ENCODE measurements at regions of chr20 and their contacts with region 1.

Region 1: GRCh38 chr20:40689943-40690835 is 1.2 kb upstream of the MAFB start:
- DNase-seq: no peak
- H3K4me3 ChIP-seq: peak overlapping the region; percentile 52
- H3K27me3 ChIP-seq: peaks cover 26% of the 10 kb centered on the region
- CTCF ChIP-seq: peak; percentile 93

Region 2: DNA sequence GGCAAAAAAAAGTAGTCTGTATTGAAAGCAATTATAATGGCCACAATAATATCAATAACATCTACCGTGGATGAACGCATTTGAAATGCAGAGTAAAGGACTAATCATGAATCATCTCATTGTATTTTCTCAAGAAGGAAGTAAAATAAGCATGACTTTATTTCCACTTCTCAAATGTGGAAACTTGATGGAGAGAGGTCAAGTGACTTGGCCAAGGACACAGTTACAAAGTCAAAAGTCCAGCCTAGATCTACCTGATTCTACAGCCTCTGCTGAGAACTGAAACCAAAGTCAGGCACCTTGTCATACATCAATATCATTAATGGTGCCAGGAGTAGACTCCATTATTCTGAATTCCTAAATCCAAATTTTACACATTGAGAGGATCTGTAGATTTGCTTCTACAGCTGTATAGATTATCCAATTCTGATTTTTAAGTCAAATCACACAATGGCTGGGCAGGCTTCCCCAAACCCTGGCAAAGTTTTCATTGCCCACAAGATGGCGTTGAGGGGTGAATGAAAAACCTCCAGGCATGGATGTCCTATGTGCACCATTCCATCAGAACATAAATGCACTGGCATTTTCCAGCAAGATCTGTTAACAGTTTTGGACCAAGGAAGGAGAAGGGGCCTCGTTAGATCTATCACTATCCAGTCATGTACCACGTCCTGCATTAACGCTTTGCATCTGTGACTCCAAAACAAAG is 424.2 kb before region 1 on chr20:
- CTCF ChIA-PET with region 1: interaction called, 12 read pairs
- POLR2A ChIA-PET with region 1: no interaction called
- DNase-seq: no peak
- H3K4me3 ChIP-seq: no peak overlapping the region
- H3K27me3 ChIP-seq: no peaks in the 10 kb centered on the region
- CTCF ChIP-seq: peak; percentile 57

Region 3: DNA sequence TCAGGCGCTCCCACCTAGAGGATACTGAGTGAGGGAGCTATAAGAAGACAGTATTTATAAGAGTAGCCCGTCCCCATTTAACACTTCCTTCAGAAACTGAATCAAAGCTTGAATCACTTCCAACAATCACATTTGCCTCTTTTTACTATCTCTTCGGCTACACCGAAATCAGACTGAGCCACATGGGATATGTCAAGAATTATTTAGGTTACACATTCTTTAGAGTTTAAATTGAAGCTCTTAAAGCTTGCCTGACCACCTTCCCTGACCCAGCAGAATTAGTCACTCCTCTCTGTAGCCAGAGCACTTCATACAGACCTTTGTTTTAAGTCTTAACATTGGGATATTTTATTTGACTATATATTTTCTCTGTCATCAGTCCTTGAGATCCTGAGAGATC is 164.8 kb before region 1 on chr20:
- CTCF ChIA-PET with region 1: no interaction called
- POLR2A ChIA-PET with region 1: no interaction called
- DNase-seq: no peak
- H3K4me3 ChIP-seq: no peak overlapping the region
- H3K27me3 ChIP-seq: no peaks in the 10 kb centered on the region
- CTCF ChIP-seq: no peak

Region 4: GRCh38 chr20:40676491-40677269 is 13.5 kb before region 1 on chr20:
- CTCF ChIA-PET with region 1: interaction called, 26 read pairs
- POLR2A ChIA-PET with region 1: no interaction called
- DNase-seq: no peak
- H3K4me3 ChIP-seq: no peak overlapping the region
- H3K27me3 ChIP-seq: peaks cover 6% of the 10 kb centered on the region
- CTCF ChIP-seq: no peak

Measured in BJ (cell line).